Activated T-helper 1 cell treated with anti-CD3 and anti-CD28 coated beads, Interleukin-12 subunit alpha, Interleukin-12 subunit beta, Interleukin-2, Interleukin-4 antibody, amounts not matched to agents 30 ng/mL and 10 ng/mL and 1 ng/mL, durations not matched to agents 14 hours and 24 hours and 36 hours (primary cell): ENCODE measurements at regions of chr16 and their contacts with region 1.

Region 1: GRCh38 chr16:23842137-23842600 is 6.4 kb downstream of the PRKCB start:
- DNase-seq: no peak
- H3K4me3 Mint-ChIP-seq: peak overlapping the region; percentile 64
- H3K27ac Mint-ChIP-seq: peak overlapping the region; percentile 93
- H3K4me1 Mint-ChIP-seq: peaks cover 83% of the 10 kb centered on the region
- H3K27me3 Mint-ChIP-seq: peaks cover 1% of the 10 kb centered on the region

Region 2: GRCh38 chr16:23510164-23510914 is 331.8 kb before region 1 on chr16 and contains the start of gene GGA2:
- intact Hi-C with region 1: loop called (anchors 1 kb)
- DNase-seq: peak; percentile 74
- H3K4me3 Mint-ChIP-seq: peak within 1 kb of the TSS; percentile 89
- H3K27ac Mint-ChIP-seq: peak within 1 kb of the TSS; percentile 87
- H3K4me1 Mint-ChIP-seq: peaks cover 50% of the 10 kb centered on the region
- H3K27me3 Mint-ChIP-seq: no peaks in the 10 kb centered on the region
- total RNA-seq, gene GGA2: 106 and 112 TPM in 2 replicates

Region 3: DNA sequence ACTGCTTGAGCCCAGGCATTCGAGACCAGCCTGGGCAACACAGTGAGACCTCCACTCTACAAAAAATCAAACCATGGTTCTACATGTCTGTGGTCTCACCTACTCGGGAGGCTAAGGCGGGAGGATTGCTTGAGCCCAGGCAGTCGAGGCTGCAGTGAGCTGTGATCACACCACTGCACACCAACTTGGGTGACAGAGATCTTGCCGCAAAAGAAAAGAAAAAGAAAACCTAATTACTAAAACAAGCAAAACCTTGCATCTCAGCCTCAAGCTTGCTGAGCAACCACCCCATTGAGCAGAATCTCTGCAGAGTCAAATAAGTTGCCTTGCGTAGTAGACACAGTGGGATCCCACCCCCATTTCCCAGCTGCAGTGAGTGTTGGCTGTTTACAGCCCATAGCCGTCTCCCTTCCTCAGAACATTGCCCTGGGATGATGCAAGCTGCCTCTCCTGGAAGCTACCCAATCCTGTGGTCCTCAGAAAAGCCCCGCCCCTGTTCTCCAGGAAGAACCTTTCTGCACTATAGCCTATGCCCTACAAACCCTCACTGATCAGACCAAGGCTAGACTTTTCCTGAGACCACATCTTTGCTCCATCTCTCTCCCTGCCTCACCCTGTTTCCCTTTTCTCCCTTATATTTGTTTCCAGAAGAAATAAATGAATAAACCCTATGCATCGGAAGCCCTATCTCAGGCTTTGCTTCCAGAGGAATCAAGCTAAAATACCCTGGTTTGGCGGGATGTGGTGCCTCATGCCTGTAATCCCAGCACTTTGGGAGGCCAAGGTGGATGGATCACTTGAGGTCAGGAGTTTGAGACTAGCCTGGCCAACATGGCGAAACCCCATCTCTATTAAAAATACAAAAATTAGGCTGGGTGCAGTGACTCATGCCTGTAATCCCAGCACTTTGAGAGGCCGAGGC is 112.4 kb before region 1 on chr16:
- intact Hi-C with region 1: no loop called
- DNase-seq: no peak
- H3K4me3 Mint-ChIP-seq: no peak overlapping the region
- H3K27ac Mint-ChIP-seq: no peak overlapping the region
- H3K4me1 Mint-ChIP-seq: peaks cover 6% of the 10 kb centered on the region
- H3K27me3 Mint-ChIP-seq: peaks cover 19% of the 10 kb centered on the region

Region 4: DNA sequence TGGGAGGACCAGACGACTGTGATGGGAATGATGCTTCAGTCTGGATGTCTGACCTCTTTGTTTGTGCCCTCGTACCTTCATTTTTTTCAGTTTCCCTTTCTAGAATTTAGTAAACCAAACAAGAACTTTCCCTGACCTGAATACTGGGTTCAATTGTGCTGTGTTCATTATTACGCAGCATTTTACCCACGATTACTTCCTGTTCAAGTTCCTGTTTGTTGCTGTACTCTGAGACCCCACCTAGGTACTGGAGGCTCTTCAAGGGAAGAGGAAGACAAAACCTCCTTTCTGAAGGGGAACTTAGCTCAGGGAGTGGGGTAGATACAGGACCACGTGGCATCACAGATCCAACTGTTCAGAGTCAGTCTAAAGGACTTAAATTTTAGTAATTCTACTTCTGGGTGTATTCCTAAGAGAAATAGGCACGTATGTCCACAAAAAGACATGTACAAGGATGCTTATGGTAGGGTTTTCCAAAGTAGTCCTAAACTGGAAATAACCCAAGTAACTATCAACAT is 15.6 kb before region 1 on chr16:
- intact Hi-C with region 1: loop called (anchors 1 kb)
- DNase-seq: no peak
- H3K4me3 Mint-ChIP-seq: peak overlapping the region; percentile 15
- H3K27ac Mint-ChIP-seq: peak overlapping the region; percentile 52
- H3K4me1 Mint-ChIP-seq: peaks cover 34% of the 10 kb centered on the region
- H3K27me3 Mint-ChIP-seq: peaks cover 2% of the 10 kb centered on the region

Region 5: DNA sequence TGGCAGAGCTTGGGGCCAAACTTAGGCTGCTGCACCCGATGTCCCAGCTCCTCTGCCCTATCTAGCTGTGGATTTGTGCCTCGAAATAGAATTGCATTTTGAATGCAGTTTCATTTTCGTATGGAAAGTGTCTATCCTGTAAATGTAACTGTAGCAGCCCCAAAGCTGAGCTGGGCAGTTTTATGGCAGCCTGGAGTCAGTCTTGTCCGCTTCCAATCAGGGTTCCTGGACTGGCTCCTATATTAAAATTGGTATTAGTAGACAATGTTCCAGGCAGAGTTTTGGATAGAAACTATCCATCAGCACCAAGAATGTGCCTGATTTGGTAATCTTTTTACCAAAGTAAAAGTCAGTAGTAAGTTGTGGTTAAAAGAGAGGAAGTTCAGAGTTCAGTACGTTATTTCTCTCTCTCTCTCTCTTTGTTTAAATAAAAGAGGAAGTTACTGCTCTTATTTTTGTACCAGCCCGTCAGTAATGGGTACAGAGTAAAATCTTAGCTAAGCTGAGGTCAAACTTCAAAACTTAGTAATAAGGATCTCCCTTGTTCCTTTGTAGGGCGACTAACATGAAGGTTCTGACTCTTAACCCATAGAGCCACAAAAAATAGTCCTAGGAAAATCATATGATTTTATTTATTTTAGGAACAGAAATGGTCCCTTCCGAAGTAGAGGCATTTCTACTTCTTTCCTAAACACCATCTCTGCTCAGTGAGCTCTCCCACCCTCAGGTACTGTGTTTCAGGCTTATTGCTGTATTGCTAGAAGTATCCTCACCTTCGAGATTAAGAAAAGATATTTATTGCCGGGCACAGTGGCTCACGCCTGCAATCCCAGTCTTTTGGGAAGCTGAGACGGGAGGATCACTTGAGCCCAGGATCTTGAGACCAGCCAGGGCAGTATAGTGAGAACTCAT is 21.6 kb after region 1 on chr16:
- intact Hi-C with region 1: loop called (anchors 1 kb)
- DNase-seq: peak; percentile 30
- H3K4me3 Mint-ChIP-seq: peak overlapping the region; percentile 84
- H3K27ac Mint-ChIP-seq: peak overlapping the region; percentile 91
- H3K4me1 Mint-ChIP-seq: peaks cover 82% of the 10 kb centered on the region
- H3K27me3 Mint-ChIP-seq: no peaks in the 10 kb centered on the region

Region 6: DNA sequence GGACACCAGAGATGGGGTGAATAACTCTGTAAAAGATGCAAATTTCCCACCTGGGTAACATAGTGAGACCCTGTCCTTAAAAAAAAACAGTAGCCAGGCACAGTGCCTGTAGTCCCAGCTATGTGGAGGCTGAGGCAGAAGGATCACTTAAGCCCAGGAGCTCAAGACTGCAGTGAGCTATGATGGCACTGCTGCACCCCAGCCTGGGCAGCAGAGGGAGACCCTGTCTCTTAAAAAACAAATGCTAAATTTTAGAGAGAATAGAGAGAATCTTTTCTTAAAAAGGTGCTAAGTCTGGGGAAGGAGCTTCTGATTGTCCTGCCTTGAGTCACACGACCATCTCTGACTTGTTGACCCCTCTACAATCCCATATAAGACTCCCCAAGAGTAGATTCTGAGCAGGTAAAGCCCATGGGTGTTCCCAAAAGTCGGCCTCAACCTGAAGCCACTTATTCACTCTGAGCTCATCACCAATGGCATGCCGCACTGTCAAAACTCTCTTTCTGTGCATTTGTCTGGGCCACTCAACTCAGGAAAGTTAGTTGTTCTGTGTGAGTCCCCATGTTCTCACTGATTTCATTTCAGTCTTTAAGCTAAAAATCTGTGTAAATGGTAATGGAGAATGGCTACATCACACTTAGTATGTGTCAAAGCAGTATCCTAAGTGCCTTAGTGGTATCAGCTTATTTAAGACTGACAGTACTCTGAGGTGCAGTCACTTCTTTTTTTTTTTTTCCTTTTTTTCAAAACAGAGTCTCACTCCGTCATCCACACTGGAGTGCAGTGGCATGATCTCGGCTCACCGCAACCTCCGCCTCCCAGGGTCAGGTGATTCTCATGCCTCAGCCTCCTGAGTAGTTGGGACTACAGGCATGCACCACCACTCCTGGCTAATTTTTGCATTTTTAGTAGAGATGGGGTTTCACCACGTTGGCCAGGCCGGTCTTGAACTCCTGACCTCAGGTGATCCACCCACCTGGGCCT is 35.2 kb after region 1 on chr16:
- intact Hi-C with region 1: loop called (anchors 1 kb)
- DNase-seq: no peak
- H3K4me3 Mint-ChIP-seq: no peak overlapping the region
- H3K27ac Mint-ChIP-seq: no peak overlapping the region
- H3K4me1 Mint-ChIP-seq: peaks cover 79% of the 10 kb centered on the region
- H3K27me3 Mint-ChIP-seq: no peaks in the 10 kb centered on the region

Region 7: DNA sequence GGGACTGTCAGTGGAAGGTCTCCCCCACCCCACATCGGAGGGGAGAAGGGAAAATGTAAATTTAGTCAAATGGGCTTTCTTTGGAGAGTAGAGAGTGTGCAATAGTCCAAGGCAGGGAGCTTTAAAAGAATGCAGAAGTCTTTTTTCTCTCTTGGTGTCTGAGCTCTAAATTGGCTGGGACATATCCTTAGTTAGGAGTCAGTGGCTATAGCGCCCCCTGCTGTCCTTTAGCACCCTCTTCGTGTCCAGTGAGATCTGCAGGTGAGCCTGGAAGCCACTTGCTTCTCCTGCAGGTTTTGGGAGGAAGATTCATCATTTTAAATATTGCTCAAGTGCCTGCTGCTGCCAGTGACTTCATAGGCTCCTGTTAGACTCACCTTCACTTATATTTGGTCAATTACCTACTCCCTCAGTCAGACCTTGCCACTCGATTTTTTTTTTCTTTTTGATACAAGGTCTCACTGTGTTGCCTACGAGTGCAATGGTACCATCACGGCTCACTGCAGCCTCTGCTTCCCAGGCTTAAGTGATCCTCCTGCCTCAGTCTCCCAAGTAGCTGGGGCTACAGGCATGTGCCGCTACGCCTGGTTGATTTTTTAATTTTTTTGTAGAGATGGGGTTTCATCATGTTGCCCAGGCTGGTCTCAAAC is 168.4 kb after region 1 on chr16:
- intact Hi-C with region 1: loop called (anchors 2 kb)
- DNase-seq: peak; percentile 63
- H3K4me3 Mint-ChIP-seq: no peak overlapping the region
- H3K27ac Mint-ChIP-seq: no peak overlapping the region
- H3K4me1 Mint-ChIP-seq: peaks cover 41% of the 10 kb centered on the region
- H3K27me3 Mint-ChIP-seq: no peaks in the 10 kb centered on the region

Region 8: GRCh38 chr16:24668481-24669061 is 826.4 kb after region 1 on chr16:
- intact Hi-C with region 1: loop called (anchors 10 kb)
- DNase-seq: no peak
- H3K4me3 Mint-ChIP-seq: peak overlapping the region; percentile 66
- H3K27ac Mint-ChIP-seq: peak overlapping the region; percentile 95
- H3K4me1 Mint-ChIP-seq: peaks cover 27% of the 10 kb centered on the region
- H3K27me3 Mint-ChIP-seq: peaks cover 2% of the 10 kb centered on the region